ENCODE measurements at regions of chr18 and their contacts with region 1.

Region 1: DNA sequence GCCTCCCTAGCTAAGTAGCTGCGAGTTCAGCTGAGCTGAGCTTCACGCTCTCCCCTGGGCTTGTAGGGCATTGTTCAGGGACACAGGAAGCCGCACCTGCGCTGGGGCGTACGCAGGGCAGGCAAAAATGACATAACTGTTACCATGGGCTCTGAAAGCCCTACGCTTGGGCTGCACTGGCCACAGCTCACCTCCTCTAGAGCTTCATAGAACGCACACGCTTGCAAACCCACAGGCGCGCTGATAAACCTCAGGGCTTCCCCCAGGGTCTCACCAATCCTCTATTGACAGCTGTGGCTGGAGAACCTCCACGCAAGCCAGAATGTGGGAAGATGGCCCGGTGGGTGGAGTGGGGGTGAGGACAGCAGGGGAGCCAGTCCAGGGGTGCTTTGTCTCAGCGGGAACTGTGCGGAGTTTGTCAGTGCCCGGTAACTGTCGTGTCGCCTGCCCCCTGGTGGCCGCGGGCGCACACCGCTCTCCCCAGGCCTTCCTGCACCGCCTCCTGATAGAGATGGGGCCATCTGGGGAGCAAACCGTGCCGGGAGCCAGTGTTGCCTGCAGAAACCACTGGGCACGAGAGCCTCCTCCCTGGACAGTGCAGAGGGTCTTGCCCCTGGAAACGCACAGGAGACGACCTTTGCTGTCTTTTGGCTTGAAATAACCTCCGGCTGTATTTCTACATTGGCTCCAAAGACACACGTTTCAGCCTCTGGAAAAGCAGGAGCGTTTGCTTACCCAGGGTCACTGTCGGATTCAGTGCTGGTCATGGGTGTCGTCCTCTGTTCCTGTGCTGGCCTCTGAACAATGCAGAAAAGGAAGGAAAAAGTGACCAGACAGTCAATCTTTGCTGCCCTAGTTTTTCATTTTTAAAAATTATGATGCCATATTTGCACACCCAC is 17.0 kb upstream of the CIDEA start:
- DNase-seq: peak; percentile 30 to 69 (median 54)
- ATAC-seq: peak; percentile 69
- H3K4me3 ChIP-seq: no peak overlapping the region
- H3K4me3 Mint-ChIP-seq: no peak overlapping the region
- H3K27ac ChIP-seq: no peak overlapping the region
- H3K27ac Mint-ChIP-seq: no peak overlapping the region
- H3K4me1 ChIP-seq: no peaks in the 10 kb centered on the region
- H3K4me1 Mint-ChIP-seq: no peaks in the 10 kb centered on the region
- H3K27me3 ChIP-seq: no peaks in the 10 kb centered on the region
- H3K27me3 Mint-ChIP-seq: peaks cover 18% of the 10 kb centered on the region
- CTCF ChIP-seq: peak; percentile 80

Region 2: DNA sequence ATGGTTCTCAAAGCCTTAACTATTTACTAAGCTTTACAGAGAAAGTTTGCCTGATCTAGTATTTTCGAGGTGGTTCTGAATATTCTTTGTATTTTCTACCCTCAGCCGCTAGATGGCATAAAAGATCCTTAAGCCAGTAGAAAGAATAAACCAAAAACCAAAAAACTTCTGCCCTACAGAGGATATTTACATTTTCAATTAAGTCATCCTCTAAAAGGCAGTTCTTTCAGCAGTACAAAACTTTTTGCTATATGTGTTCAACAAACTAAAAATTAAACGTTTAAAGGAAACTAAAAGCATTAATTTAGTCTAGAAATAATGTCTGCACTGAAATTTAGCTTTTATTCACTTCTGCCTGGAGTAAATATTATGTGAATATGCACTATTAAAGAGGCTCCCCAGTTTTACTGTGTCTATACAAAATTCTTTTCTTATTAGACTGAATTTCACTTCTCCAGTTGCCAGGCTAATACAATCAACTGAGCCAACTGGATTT is 1385.3 kb before region 1 on chr18:
- CTCF ChIA-PET with region 1: no interaction called
- POLR2A ChIA-PET with region 1: no interaction called
- intact Hi-C with region 1: loop called in 1 of 2 experiments (anchors 5 kb)
- DNase-seq: peak in 2 of 9 experiments; percentile 16 to 38
- ATAC-seq: no peak
- H3K4me3 ChIP-seq: no peak overlapping the region
- H3K4me3 Mint-ChIP-seq: no peak overlapping the region
- H3K27ac ChIP-seq: no peak overlapping the region
- H3K27ac Mint-ChIP-seq: no peak overlapping the region
- H3K4me1 ChIP-seq: no peaks in the 10 kb centered on the region
- H3K4me1 Mint-ChIP-seq: no peaks in the 10 kb centered on the region
- H3K27me3 ChIP-seq: no peaks in the 10 kb centered on the region
- H3K27me3 Mint-ChIP-seq: peaks cover 5% of the 10 kb centered on the region
- CTCF ChIP-seq: peak; percentile 43

Region 3: GRCh38 chr18:11733031-11733430 is 504.2 kb before region 1 on chr18:
- CTCF ChIA-PET with region 1: no interaction called
- POLR2A ChIA-PET with region 1: no interaction called
- intact Hi-C with region 1: loop called in 1 of 2 experiments (anchors 5 kb)
- DNase-seq: peak; percentile 32 to 75 (median 64)
- ATAC-seq: peak; percentile 57
- H3K4me3 ChIP-seq: no peak overlapping the region
- H3K4me3 Mint-ChIP-seq: peak overlapping the region; percentile 29
- H3K27ac ChIP-seq: no peak overlapping the region
- H3K27ac Mint-ChIP-seq: no peak overlapping the region
- H3K4me1 ChIP-seq: no peaks in the 10 kb centered on the region
- H3K4me1 Mint-ChIP-seq: peaks cover 4% of the 10 kb centered on the region
- H3K27me3 ChIP-seq: peaks cover 0 to 3% of the 10 kb centered on the region in 2 experiments
- H3K27me3 Mint-ChIP-seq: peaks cover 34% of the 10 kb centered on the region
- CTCF ChIP-seq: peak; percentile 72